Motor neuron (in vitro differentiated cells): ENCODE measurements at regions of chr3 and their contacts with region 1.

Region 1: DNA sequence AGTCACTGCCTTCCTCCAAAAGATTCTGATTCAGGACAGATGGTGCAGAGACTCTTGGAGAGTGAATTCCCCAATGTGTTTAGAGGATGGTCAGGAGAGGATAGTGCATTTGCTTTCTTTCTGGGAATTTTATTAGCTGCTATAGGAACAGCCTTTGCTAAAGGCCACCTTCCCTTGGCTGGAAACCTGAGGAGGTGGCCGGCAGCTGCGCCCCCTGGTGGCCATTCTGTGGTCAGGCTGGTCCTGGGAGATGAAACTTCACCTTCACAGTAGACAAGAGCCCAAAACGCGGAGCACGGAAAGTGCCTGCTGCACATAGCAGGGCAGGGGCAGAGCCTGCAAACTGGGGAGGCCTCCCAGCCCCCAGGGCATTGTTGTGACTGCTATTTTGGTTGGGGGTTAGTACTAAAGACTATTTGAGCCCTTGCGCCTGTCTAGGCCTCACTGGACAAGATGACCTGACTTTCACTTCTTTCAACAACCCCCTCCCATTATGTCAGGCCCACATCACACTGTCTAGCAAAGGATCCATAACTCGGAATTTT is 34.3 kb downstream of the SEC22C start:
- ATAC-seq: peak; percentile 64 to 92 (median 74)
- H3K4me3 ChIP-seq: no peak overlapping the region
- H3K27ac ChIP-seq: no peak overlapping the region
- H3K4me1 ChIP-seq: peaks cover 0 to 9% of the 10 kb centered on the region in 2 donors

Region 2: GRCh38 chr3:42159706-42160472 is 387.6 kb before region 1 on chr3:
- in situ Hi-C with region 1: no loop called
- ATAC-seq: peak; percentile 84 to 97 (median 91)
- H3K4me3 ChIP-seq: peak overlapping the region in 4 of 5 donors; percentile 9 to 35 (median 17)
- H3K27ac ChIP-seq: peak overlapping the region; percentile 54 to 65
- H3K4me1 ChIP-seq: peaks cover 9 to 14% of the 10 kb centered on the region in 2 donors

Region 3: GRCh38 chr3:42229942-42230688 is 317.4 kb before region 1 on chr3:
- in situ Hi-C with region 1: loop called in 4 of 9 experiments (anchors 10 to 25 kb)
- ATAC-seq: peak in 6 of 8 experiments; percentile 25 to 85 (median 72)
- H3K4me3 ChIP-seq: no peak overlapping the region
- H3K27ac ChIP-seq: no peak overlapping the region
- H3K4me1 ChIP-seq: no peaks in the 10 kb centered on the region

Region 4: GRCh38 chr3:42247576-42248027 is 299.9 kb before region 1 on chr3:
- in situ Hi-C with region 1: loop called in 3 of 9 experiments (anchors 25 kb)
- ATAC-seq: peak in 7 of 8 experiments; percentile 54 to 86 (median 78)
- H3K4me3 ChIP-seq: no peak overlapping the region
- H3K27ac ChIP-seq: no peak overlapping the region
- H3K4me1 ChIP-seq: peaks cover 0 to 2% of the 10 kb centered on the region in 2 donors

Region 5: GRCh38 chr3:42732829-42733459 is 185.5 kb after region 1 on chr3:
- in situ Hi-C with region 1: no loop called
- ATAC-seq: peak in 1 of 8 experiments; percentile 31
- H3K4me3 ChIP-seq: no peak overlapping the region
- H3K27ac ChIP-seq: no peak overlapping the region
- H3K4me1 ChIP-seq: peaks cover 4 to 12% of the 10 kb centered on the region in 2 donors